ENCODE measurements at regions of chr10 and their contacts with region 1.

Region 1: GRCh38 chr10:86267286-86268195 is 99.1 kb downstream of the GRID1 start:
- DNase-seq: peak; percentile 16
- H3K4me3 ChIP-seq: no peak overlapping the region
- H3K27ac ChIP-seq: no peak overlapping the region
- H3K4me1 ChIP-seq: peaks cover 0 to 27% of the 10 kb centered on the region in 2 experiments; a peak in 1 of 4 replicates
- H3K27me3 ChIP-seq: no peaks in the 10 kb centered on the region
- CTCF ChIP-seq: no peak
- EP300 ChIP-seq: no peak
- RAD21 ChIP-seq: no peak

Region 2: GRCh38 chr10:86285136-86285790 is 17.7 kb after region 1 on chr10:
- CTCF ChIA-PET with region 1: interaction called, 11 read pairs
- POLR2A ChIA-PET with region 1: interaction called, 3 read pairs
- DNase-seq: peak; percentile 66
- H3K4me3 ChIP-seq: no peak overlapping the region
- H3K27ac ChIP-seq: peak overlapping the region in 1 of 2 experiments; percentile 70; a peak in 1 of 4 replicates
- H3K4me1 ChIP-seq: peaks cover 0 to 29% of the 10 kb centered on the region in 2 experiments; a peak in 1 of 4 replicates
- H3K27me3 ChIP-seq: no peaks in the 10 kb centered on the region
- CTCF ChIP-seq: no peak
- EP300 ChIP-seq: peak in 1 of 2 experiments; percentile 58; a peak in 1 of 4 replicates
- RAD21 ChIP-seq: no peak

Region 3: GRCh38 chr10:86321568-86321967 is 54.0 kb after region 1 on chr10:
- CTCF ChIA-PET with region 1: no interaction called
- POLR2A ChIA-PET with region 1: no interaction called
- DNase-seq: no peak
- H3K4me3 ChIP-seq: no peak overlapping the region
- H3K27ac ChIP-seq: peak overlapping the region in 1 of 2 experiments; percentile 36; a peak in 1 of 4 replicates
- H3K4me1 ChIP-seq: peaks cover 0 to 33% of the 10 kb centered on the region in 2 experiments; a peak in 2 of 4 replicates
- H3K27me3 ChIP-seq: no peaks in the 10 kb centered on the region
- CTCF ChIP-seq: no peak
- EP300 ChIP-seq: no peak
- RAD21 ChIP-seq: no peak

Measured in SK-N-SH (cell line).